ENCODE measurements at regions of chr5 and their contacts with region 1.

Region 1: GRCh38 chr5:140145818-140146522 is 20.2 kb downstream of the IGIP start:
- DNase-seq: peak in 8 of 9 experiments; percentile 22 to 72 (median 52)
- ATAC-seq: peak; percentile 69
- H3K4me3 ChIP-seq: peak overlapping the region; percentile 32 to 36
- H3K4me3 Mint-ChIP-seq: peak overlapping the region; percentile 66
- H3K27ac ChIP-seq: no peak overlapping the region
- H3K27ac Mint-ChIP-seq: no peak overlapping the region
- H3K4me1 ChIP-seq: peaks cover 22% of the 10 kb centered on the region
- H3K4me1 Mint-ChIP-seq: peaks cover 18% of the 10 kb centered on the region
- H3K27me3 ChIP-seq: peaks cover 7 to 8% of the 10 kb centered on the region in 2 experiments
- H3K27me3 Mint-ChIP-seq: peaks cover 18% of the 10 kb centered on the region
- CTCF ChIP-seq: peak; percentile 64

Region 2: GRCh38 chr5:140060816-140061215 is 85.2 kb before region 1 on chr5:
- CTCF ChIA-PET with region 1: interaction called, 16 read pairs
- POLR2A ChIA-PET with region 1: no interaction called
- intact Hi-C with region 1: no loop called
- DNase-seq: no peak
- ATAC-seq: no peak
- H3K4me3 ChIP-seq: no peak overlapping the region
- H3K4me3 Mint-ChIP-seq: no peak overlapping the region
- H3K27ac ChIP-seq: no peak overlapping the region
- H3K27ac Mint-ChIP-seq: no peak overlapping the region
- H3K4me1 ChIP-seq: no peaks in the 10 kb centered on the region
- H3K4me1 Mint-ChIP-seq: no peaks in the 10 kb centered on the region
- H3K27me3 ChIP-seq: peaks cover 0 to 7% of the 10 kb centered on the region in 2 experiments
- H3K27me3 Mint-ChIP-seq: peaks cover 22% of the 10 kb centered on the region
- CTCF ChIP-seq: no peak

Region 3: GRCh38 chr5:140084541-140084940 is 61.4 kb before region 1 on chr5:
- CTCF ChIA-PET with region 1: interaction called, 17 read pairs
- POLR2A ChIA-PET with region 1: no interaction called
- intact Hi-C with region 1: no loop called
- DNase-seq: no peak
- ATAC-seq: no peak
- H3K4me3 ChIP-seq: no peak overlapping the region
- H3K4me3 Mint-ChIP-seq: no peak overlapping the region
- H3K27ac ChIP-seq: no peak overlapping the region
- H3K27ac Mint-ChIP-seq: no peak overlapping the region
- H3K4me1 ChIP-seq: no peaks in the 10 kb centered on the region
- H3K4me1 Mint-ChIP-seq: no peaks in the 10 kb centered on the region
- H3K27me3 ChIP-seq: no peaks in the 10 kb centered on the region
- H3K27me3 Mint-ChIP-seq: peaks cover 2% of the 10 kb centered on the region
- CTCF ChIP-seq: no peak

Region 4: GRCh38 chr5:140107312-140108083 is 38.5 kb before region 1 on chr5:
- CTCF ChIA-PET with region 1: interaction called, 43 read pairs
- POLR2A ChIA-PET with region 1: interaction called, 4 read pairs
- intact Hi-C with region 1: loop called in 1 of 2 experiments (anchors 1 kb)
- DNase-seq: peak; percentile 88 to 99 (median 93)
- ATAC-seq: peak; percentile 85
- H3K4me3 ChIP-seq: peak overlapping the region; percentile 63 to 81
- H3K4me3 Mint-ChIP-seq: peak overlapping the region; percentile 96
- H3K27ac ChIP-seq: peak overlapping the region; percentile 96 to 98
- H3K27ac Mint-ChIP-seq: peak overlapping the region; percentile 98
- H3K4me1 ChIP-seq: peaks cover 45% of the 10 kb centered on the region
- H3K4me1 Mint-ChIP-seq: peaks cover 48% of the 10 kb centered on the region
- H3K27me3 ChIP-seq: no peaks in the 10 kb centered on the region
- H3K27me3 Mint-ChIP-seq: peaks cover 20% of the 10 kb centered on the region
- CTCF ChIP-seq: no peak

Region 5: DNA sequence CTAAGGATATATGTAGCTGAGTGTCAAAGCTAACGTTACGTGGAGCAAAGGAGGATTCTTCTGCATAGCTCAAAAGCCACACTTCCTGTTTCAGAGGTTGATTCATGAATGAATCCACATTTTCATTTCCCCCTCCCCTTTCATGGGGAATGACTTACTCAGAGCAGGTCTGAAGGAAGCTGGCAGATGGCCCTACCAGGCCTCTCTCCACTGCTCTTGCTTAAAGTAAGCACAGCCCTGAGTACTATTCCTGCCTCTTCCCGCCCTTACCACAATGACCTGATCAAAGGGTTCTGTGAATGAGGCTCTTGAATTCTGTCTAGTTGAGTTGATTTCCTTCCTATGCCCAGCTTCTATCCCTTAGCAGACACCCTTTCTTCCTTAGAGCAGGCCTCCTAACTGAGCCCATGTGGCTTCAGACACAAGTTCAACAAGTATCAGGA is 14.0 kb before region 1 on chr5:
- CTCF ChIA-PET with region 1: interaction called, 67 read pairs
- POLR2A ChIA-PET with region 1: interaction called, 5 read pairs
- intact Hi-C with region 1: no loop called
- DNase-seq: peak in 1 of 9 experiments; percentile 30
- ATAC-seq: peak; percentile 55
- H3K4me3 ChIP-seq: no peak overlapping the region
- H3K4me3 Mint-ChIP-seq: no peak overlapping the region
- H3K27ac ChIP-seq: no peak overlapping the region
- H3K27ac Mint-ChIP-seq: no peak overlapping the region
- H3K4me1 ChIP-seq: peaks cover 21% of the 10 kb centered on the region
- H3K4me1 Mint-ChIP-seq: peaks cover 50% of the 10 kb centered on the region
- H3K27me3 ChIP-seq: no peaks in the 10 kb centered on the region
- H3K27me3 Mint-ChIP-seq: no peaks in the 10 kb centered on the region
- CTCF ChIP-seq: no peak

Region 6: GRCh38 chr5:140341591-140341990 is 195.6 kb after region 1 on chr5:
- CTCF ChIA-PET with region 1: no interaction called
- POLR2A ChIA-PET with region 1: no interaction called
- intact Hi-C with region 1: no loop called
- DNase-seq: no peak
- ATAC-seq: no peak
- H3K4me3 ChIP-seq: no peak overlapping the region
- H3K4me3 Mint-ChIP-seq: no peak overlapping the region
- H3K27ac ChIP-seq: no peak overlapping the region
- H3K27ac Mint-ChIP-seq: no peak overlapping the region
- H3K4me1 ChIP-seq: peaks cover 23% of the 10 kb centered on the region
- H3K4me1 Mint-ChIP-seq: peaks cover 25% of the 10 kb centered on the region
- H3K27me3 ChIP-seq: peaks cover 0 to under 1% of the 10 kb centered on the region in 2 experiments
- H3K27me3 Mint-ChIP-seq: peaks cover 2% of the 10 kb centered on the region
- CTCF ChIP-seq: no peak